ENCODE measurements at regions of chr10 and their contacts with region 1.

Region 1: DNA sequence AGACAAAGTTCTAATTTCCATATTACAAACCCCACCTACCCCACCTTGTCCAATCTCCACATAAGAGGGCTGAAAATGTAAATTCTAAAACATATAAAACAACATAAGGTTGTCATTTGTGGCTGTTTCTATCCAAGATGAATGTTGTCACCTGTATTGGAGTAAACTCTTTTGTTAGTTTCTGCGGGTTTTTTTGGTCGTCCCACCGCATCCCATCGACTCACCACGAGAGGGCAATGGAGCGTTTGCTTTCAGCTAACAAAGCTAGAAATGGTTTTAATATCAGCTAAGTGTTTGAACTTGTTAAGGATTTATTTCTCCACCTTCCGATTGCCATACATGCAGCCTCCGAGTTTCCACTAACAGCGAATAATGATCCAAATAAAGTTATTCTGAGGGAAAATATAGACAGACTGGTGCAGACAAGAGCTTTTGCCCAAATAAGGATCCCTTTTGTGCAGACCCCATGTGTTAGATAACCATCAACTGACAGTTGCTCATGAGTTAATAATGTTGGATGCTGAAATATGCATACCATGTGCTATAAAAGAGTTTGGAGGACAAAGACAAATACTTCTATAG is 137.2 kb downstream of the ARID5B start:
- DNase-seq: peak; percentile 76 to 85 (median 78)
- ATAC-seq: peak; percentile 82
- H3K4me3 ChIP-seq: no peak overlapping the region
- H3K4me1 ChIP-seq: peaks cover 24% of the 10 kb centered on the region
- CTCF ChIP-seq: peak; percentile 75

Region 2: GRCh38 chr10:61903221-61903927 is 135.3 kb before region 1 on chr10:
- intact Hi-C with region 1: loop called in 1 of 2 experiments (anchors 5 kb)
- DNase-seq: peak; percentile 68 to 85 (median 81)
- ATAC-seq: peak; percentile 67
- H3K4me3 ChIP-seq: peak overlapping the region; percentile 67
- H3K4me1 ChIP-seq: peaks cover 33% of the 10 kb centered on the region
- CTCF ChIP-seq: no peak

Region 3: GRCh38 chr10:61937631-61938351 is 100.9 kb before region 1 on chr10:
- intact Hi-C with region 1: no loop called
- DNase-seq: no peak
- ATAC-seq: peak; percentile 40
- H3K4me3 ChIP-seq: no peak overlapping the region
- H3K4me1 ChIP-seq: peaks cover 16% of the 10 kb centered on the region
- CTCF ChIP-seq: no peak

Region 4: GRCh38 chr10:62244780-62245467 is 206.2 kb after region 1 on chr10:
- intact Hi-C with region 1: loop called in 1 of 2 experiments (anchors 5 kb)
- DNase-seq: peak in 1 of 3 donors; percentile 81
- ATAC-seq: peak; percentile 92
- H3K4me3 ChIP-seq: no peak overlapping the region
- H3K4me1 ChIP-seq: peaks cover 8% of the 10 kb centered on the region
- CTCF ChIP-seq: peak; percentile 59